Activated T-helper 1 cell treated with anti-CD3 and anti-CD28 coated beads, Interleukin-12 subunit alpha, Interleukin-12 subunit beta, Interleukin-2, Interleukin-4 antibody, amounts not matched to agents 30 ng/mL and 10 ng/mL and 1 ng/mL, durations not matched to agents 14 hours and 24 hours and 36 hours (primary cell): ENCODE measurements at regions of chr9 and their contacts with region 1.

Region 1: GRCh38 chr9:4375424-4376200 is 75.7 kb upstream of the GLIS3 start:
- DNase-seq: no peak
- H3K4me3 Mint-ChIP-seq: no peak overlapping the region
- H3K27ac Mint-ChIP-seq: no peak overlapping the region
- H3K4me1 Mint-ChIP-seq: no peaks in the 10 kb centered on the region
- H3K27me3 Mint-ChIP-seq: peaks cover 7% of the 10 kb centered on the region

Region 2: DNA sequence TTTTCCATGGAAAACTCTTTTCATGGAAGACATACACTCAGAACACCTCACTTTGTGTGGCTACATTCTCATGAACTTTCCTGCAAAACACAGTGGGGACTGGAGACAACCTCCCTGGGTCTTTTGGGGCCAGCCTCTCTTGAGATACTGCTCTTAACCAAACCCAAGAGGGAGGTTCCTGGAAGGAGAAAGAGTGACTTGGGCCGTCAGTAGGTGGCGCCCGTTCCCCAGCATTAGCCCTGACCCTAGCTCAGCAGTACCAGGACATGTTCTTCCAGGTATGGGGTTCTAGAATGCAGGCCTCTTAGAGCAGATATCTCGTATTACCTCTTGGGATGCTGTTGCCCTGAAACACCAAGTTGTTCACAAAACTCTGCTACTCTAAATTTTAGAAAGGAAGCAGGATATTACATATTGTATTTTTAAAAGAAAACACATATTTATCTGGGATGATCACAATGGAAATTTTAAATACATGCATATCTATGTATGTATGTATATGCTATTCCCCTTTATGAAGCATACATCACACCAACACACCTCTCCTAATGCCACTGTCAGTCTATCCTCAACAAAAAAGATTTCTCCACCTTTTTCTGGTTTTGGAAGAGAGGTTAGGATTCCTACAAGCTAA is 59.9 kb before region 1 on chr9:
- intact Hi-C with region 1: loop called (anchors 2 kb)
- DNase-seq: peak; percentile 60
- H3K4me3 Mint-ChIP-seq: no peak overlapping the region
- H3K27ac Mint-ChIP-seq: no peak overlapping the region
- H3K4me1 Mint-ChIP-seq: peaks cover 5% of the 10 kb centered on the region
- H3K27me3 Mint-ChIP-seq: peaks cover 13% of the 10 kb centered on the region

Region 3: GRCh38 chr9:4435197-4435596 is 59.6 kb after region 1 on chr9:
- intact Hi-C with region 1: no loop called
- DNase-seq: no peak
- H3K4me3 Mint-ChIP-seq: no peak overlapping the region
- H3K27ac Mint-ChIP-seq: no peak overlapping the region
- H3K4me1 Mint-ChIP-seq: no peaks in the 10 kb centered on the region
- H3K27me3 Mint-ChIP-seq: peaks cover 3% of the 10 kb centered on the region